ENCODE measurements at regions of chr3 and their contacts with region 1.

Region 1: GRCh38 chr3:170171563-170171962 is 10.0 kb downstream of the PHC3 start:
- DNase-seq: no peak
- ATAC-seq: peak; percentile 31
- H3K4me3 ChIP-seq: no peak overlapping the region
- H3K4me3 Mint-ChIP-seq: peak overlapping the region; percentile 60
- H3K27ac ChIP-seq: peak overlapping the region in 1 of 2 experiments; percentile 12
- H3K27ac Mint-ChIP-seq: peak overlapping the region; percentile 87
- H3K4me1 ChIP-seq: peaks cover 42% of the 10 kb centered on the region
- H3K4me1 Mint-ChIP-seq: peaks cover 69% of the 10 kb centered on the region
- H3K27me3 ChIP-seq: no peaks in the 10 kb centered on the region
- H3K27me3 Mint-ChIP-seq: no peaks in the 10 kb centered on the region
- CTCF ChIP-seq: no peak

Region 2: GRCh38 chr3:170137986-170138385 is 33.6 kb before region 1 on chr3:
- CTCF ChIA-PET with region 1: no interaction called
- POLR2A ChIA-PET with region 1: no interaction called
- intact Hi-C with region 1: loop called in 1 of 2 experiments (anchors 5 kb)
- DNase-seq: no peak
- ATAC-seq: no peak
- H3K4me3 ChIP-seq: no peak overlapping the region
- H3K4me3 Mint-ChIP-seq: no peak overlapping the region
- H3K27ac ChIP-seq: no peak overlapping the region
- H3K27ac Mint-ChIP-seq: no peak overlapping the region
- H3K4me1 ChIP-seq: peaks cover 4% of the 10 kb centered on the region
- H3K4me1 Mint-ChIP-seq: peaks cover 49% of the 10 kb centered on the region
- H3K27me3 ChIP-seq: no peaks in the 10 kb centered on the region
- H3K27me3 Mint-ChIP-seq: no peaks in the 10 kb centered on the region
- CTCF ChIP-seq: no peak

Region 3: DNA sequence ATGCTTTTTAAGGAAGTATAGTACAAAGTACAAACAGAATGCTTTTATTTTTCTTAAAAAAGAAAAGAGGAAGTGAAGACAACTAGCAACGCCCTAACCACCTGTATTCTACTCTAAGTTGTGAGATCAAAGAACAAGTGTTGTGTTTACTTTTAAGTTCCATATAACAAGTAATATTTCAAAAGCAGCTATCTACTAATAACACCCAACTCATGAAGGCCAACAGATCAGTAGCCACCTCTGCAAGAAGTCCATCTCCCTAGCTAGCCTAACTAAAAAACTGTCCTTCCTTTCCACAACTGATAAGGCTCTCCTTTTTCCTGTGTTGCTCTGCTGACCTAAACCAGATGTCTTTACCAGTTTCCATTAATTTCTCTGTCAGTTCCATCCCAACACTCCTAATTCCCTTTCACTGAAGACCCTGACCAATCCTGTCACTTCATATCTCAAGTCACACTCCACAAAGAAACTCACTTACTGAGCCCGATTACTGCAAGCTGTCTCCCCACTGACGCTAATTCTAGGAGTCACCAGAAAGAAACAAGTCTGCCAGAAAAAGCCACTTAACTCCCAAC is 16.9 kb before region 1 on chr3:
- CTCF ChIA-PET with region 1: interaction called, 5 read pairs
- POLR2A ChIA-PET with region 1: interaction called, 6 read pairs
- intact Hi-C with region 1: loop called in 1 of 2 experiments (anchors 2 kb)
- DNase-seq: peak in 1 of 9 experiments; percentile 29
- ATAC-seq: peak; percentile 78
- H3K4me3 ChIP-seq: no peak overlapping the region
- H3K4me3 Mint-ChIP-seq: peak overlapping the region; percentile 74
- H3K27ac ChIP-seq: peak overlapping the region in 1 of 2 experiments; percentile 61
- H3K27ac Mint-ChIP-seq: peak overlapping the region; percentile 96
- H3K4me1 ChIP-seq: peaks cover 38% of the 10 kb centered on the region
- H3K4me1 Mint-ChIP-seq: peaks cover 58% of the 10 kb centered on the region
- H3K27me3 ChIP-seq: no peaks in the 10 kb centered on the region
- H3K27me3 Mint-ChIP-seq: no peaks in the 10 kb centered on the region
- CTCF ChIP-seq: no peak

Measured in CD8-positive, alpha-beta T cell (primary cell).